ENCODE measurements at regions of chr14 and their contacts with region 1.

Region 1: DNA sequence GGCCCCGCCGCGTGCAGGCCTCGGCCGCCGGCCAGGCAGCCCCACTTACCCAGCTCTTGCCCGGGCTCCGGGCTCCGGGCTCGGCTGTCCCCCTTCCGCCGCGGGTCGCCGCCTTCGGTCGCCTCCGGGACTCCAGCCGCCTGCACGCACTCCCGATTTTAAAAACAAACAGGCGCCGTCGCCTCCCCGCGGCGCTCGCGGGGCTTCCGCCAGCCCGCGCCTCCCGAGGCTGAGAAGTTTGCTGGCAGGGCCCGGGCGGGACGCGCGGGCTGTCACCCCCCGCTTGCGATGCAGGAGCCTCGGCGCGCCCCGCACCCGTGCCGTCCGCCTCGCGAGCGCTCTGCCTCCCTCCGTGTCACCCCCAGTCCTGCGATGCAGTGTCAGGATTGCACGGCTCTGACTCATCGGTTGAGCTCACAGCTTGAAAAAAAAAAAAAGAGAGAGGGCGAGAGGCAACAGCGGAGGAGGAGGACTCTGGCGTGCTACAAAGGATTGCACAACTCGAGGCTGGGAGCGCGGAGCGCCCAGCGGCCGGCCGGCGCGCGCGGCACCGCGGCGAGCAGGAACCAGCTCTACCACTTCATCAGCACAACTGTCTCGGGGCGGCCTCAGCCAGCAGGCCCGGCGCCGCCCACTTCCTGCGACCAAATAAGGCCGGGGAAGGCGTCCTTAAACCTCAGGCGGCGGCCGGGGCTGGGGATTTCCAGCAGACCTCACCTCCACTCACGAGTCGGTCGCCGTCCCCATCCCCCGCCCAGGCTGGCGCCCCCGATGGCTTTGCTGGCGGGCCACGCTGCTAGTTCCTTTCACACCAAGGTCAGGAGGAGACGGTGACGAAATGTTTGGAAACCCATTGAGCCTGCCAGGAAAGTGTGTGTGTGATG is 45.8 kb upstream of the PNMA1 start:
- DNase-seq: peak; percentile 95
- ATAC-seq: peak; percentile 89
- H3K4me3 Mint-ChIP-seq: peak overlapping the region; percentile 79
- H3K27ac Mint-ChIP-seq: peak overlapping the region; percentile 96
- H3K4me1 Mint-ChIP-seq: peaks cover 61% of the 10 kb centered on the region
- H3K27me3 Mint-ChIP-seq: peaks cover 29% of the 10 kb centered on the region
- CTCF ChIP-seq: no peak

Region 2: DNA sequence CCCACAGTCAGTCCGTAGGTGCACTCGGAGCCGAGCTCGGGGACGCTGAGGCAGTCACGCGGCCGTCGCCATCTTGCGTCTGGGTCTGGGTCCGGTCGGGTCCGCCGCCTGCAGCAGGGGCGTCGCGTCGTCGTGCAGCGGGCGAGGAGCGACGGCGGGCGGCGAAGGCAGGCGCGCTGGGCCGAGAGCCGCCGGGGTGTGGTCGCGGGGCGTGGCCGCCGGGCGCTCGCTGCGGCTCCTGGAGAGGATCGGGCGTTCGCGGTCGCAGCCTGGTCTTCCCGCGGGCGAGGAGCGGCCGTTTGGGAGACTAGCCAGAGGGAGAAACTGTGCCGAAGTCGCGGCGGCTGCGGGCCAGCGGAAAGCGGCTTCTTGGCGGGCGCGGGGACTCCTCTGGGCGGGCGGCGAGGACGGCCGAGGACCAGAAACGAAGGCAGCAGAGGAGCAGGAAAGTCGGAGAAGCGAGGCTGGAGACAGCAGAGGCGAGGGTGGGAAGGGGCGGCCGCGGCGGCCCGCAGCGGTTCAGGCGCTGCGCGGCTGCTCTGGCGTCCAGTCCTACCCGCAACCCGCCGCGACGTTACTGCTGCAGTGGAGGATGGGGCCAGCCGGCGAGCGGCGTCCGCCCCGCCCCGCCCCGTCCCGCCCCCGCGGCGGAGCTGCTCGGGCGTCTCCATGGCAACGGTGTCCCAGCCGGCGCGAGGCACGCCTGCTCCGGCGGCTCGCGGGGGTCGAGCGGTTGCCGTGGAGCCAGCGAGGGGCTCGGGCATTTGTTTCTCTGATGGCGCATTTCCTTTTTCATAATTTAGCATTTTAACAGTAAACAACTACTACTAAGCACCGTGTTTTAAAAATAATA is 45.9 kb before region 1 on chr14 and contains the start of gene PNMA1:
- CTCF ChIA-PET with region 1: interaction called, 21 read pairs
- POLR2A ChIA-PET with region 1: interaction called, 4 read pairs
- DNase-seq: peak; percentile 90
- ATAC-seq: peak; percentile 68
- H3K4me3 Mint-ChIP-seq: peak within 1 kb of the TSS; percentile 90
- H3K27ac Mint-ChIP-seq: peak within 1 kb of the TSS; percentile 97
- H3K4me1 Mint-ChIP-seq: peaks cover 36% of the 10 kb centered on the region
- H3K27me3 Mint-ChIP-seq: peaks cover 7% of the 10 kb centered on the region
- CTCF ChIP-seq: no peak
- total RNA-seq, gene PNMA1: 46.0 to 50.2 TPM (median 49.6 TPM) in 3 replicates

Region 3: DNA sequence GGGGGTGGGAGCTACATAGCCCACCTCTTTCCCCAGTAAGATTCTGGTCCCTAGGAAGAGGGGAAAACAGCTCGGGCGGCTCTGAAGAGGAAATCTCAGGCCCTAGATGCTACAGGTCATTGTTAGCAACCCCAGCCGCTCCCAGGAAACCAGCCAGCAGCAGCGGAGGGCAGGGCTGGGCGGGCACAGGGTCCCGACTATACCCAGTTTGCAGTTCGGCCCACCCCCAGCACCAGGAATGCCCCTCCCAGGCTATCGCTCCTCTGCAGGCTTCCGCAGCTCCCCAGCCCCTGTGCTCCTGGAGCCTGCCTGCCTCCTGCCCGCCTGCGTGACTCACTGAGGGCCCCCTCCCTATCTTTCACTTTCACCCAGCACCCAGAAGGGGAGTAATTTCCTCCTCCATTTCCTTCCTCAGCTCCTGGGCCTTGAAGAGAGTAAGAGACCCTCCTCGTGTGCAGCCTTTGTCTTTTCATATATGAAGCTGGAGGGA is 18.5 kb before region 1 on chr14:
- CTCF ChIA-PET with region 1: interaction called, 71 read pairs
- POLR2A ChIA-PET with region 1: interaction called, 9 read pairs
- DNase-seq: peak; percentile 69
- ATAC-seq: peak; percentile 87
- H3K4me3 Mint-ChIP-seq: peak overlapping the region; percentile 41
- H3K27ac Mint-ChIP-seq: peak overlapping the region; percentile 94
- H3K4me1 Mint-ChIP-seq: peaks cover 48% of the 10 kb centered on the region
- H3K27me3 Mint-ChIP-seq: no peaks in the 10 kb centered on the region
- CTCF ChIP-seq: no peak

Region 4: DNA sequence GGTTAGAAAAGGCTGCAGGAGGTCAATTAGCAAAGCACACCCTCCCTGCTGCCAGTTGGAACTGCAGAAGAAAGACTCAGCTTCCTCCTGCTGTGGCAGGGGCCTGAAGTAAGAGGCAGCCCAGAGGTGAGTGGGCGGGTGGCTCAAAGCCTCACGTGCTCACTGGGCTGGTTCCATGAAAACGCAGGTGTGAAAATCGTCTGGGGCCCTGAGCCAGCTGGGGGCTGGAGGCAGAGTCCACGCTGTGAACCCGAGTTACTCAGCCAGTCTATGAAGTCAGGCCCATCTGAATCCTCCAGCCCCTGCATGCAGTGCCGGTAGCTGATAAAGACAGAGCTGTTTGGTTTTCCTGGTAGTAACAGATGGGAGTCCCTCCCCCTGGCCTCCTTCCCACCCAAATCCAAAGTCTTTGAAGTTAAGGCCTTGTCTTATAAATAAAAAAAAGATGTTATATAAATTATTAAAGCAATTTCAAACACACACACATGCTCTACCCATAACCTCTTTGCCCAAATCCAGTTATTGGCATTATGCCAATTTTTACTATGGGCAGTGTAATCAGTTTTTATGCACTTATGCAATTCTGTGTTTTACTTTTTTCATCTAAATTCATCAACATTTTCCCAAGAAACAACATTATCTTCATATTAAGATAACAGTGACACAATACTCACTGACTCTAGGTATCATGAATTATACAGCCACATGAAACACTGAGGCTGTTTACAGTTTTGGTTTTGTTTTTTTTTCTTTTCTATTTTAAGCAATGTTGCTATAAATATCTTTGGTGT is 12.1 kb after region 1 on chr14:
- CTCF ChIA-PET with region 1: interaction called, 42 read pairs
- POLR2A ChIA-PET with region 1: interaction called, 7 read pairs
- DNase-seq: peak; percentile 63
- ATAC-seq: peak; percentile 84
- H3K4me3 Mint-ChIP-seq: no peak overlapping the region
- H3K27ac Mint-ChIP-seq: no peak overlapping the region
- H3K4me1 Mint-ChIP-seq: peaks cover 34% of the 10 kb centered on the region
- H3K27me3 Mint-ChIP-seq: peaks cover 15% of the 10 kb centered on the region
- CTCF ChIP-seq: no peak

Region 5: GRCh38 chr14:73785873-73786695 is 26.1 kb after region 1 on chr14:
- CTCF ChIA-PET with region 1: interaction called, 27 read pairs
- POLR2A ChIA-PET with region 1: interaction called, 5 read pairs
- DNase-seq: peak; percentile 50
- ATAC-seq: peak; percentile 8
- H3K4me3 Mint-ChIP-seq: peak overlapping the region; percentile 90
- H3K27ac Mint-ChIP-seq: peak overlapping the region; percentile 63
- H3K4me1 Mint-ChIP-seq: peaks cover 43% of the 10 kb centered on the region
- H3K27me3 Mint-ChIP-seq: peaks cover 86% of the 10 kb centered on the region
- CTCF ChIP-seq: no peak

Region 6: DNA sequence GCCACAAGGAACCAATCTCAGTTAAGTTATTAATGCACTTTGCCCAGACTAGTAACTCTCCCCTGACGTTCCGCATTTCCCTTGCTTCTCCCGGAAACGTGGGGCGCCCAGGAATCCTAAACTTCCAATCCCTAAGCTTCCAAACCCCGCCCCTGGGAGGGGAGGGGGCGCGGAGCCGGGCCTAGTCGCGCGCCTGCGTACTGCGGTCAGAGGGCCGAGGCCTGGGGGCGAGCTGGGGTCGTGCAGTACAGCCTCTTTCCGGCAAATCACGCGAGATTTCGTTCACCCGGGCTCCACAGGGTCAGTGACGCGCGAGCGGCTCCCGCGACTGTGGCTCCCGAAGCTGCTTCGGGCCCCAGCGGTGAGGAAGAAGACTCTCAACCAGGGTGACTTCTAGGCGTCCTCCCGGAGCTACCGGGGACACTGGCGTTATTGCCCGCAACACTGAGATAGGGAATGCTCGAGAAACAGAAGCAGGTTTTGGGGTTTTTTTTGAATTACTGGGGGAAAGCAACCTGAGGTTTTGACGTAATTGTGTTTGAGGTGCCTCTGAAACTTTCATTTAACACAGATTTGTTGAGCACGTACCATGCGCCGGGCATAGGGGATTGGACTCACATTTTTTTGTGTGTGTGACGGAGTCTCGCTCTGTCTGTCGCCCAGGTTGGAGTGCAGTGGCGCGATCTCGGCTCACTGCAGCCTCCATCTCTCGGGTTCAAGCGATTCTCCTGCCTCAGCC is 91.9 kb after region 1 on chr14 and contains the start of gene PTGR2:
- CTCF ChIA-PET with region 1: interaction called, 4 read pairs
- POLR2A ChIA-PET with region 1: interaction called, 10 read pairs
- DNase-seq: peak; percentile 98
- ATAC-seq: peak; percentile 97
- H3K4me3 Mint-ChIP-seq: peak within 1 kb of the TSS; percentile 98
- H3K27ac Mint-ChIP-seq: peak within 1 kb of the TSS; percentile 100
- H3K4me1 Mint-ChIP-seq: peaks cover 22% of the 10 kb centered on the region
- H3K27me3 Mint-ChIP-seq: no peaks in the 10 kb centered on the region
- CTCF ChIP-seq: no peak
- total RNA-seq, gene PTGR2: 20.7 to 23.6 TPM (median 22.1 TPM) in 3 replicates

Measured in WTC11 (cell line).